B cell (primary cell): ENCODE measurements at regions of chr16 and their contacts with region 1.

Region 1: DNA sequence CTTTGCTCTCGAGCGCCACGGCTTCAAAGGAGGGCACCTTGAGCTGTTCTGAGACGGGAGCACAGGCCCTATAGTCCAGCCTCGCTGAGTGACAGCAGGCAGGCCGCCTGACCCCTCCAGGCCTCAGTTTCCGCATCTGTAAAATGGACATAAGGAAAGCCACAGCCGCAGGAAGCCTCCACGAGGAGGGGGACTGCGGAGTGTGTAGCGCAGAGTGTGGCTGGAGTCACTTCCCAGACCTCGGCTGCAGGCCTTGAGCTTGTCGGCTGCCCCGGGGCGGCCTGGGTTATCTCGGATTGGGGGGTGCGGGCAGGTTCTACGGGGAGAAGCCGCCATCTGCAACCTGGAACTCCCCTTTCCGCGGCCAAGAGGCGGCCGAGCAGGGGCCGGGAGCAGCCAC is 40.8 kb downstream of the ZFPM1 start:
- DNase-seq: no peak
- ATAC-seq: no peak
- H3K4me3 ChIP-seq: no peak overlapping the region
- H3K4me3 Mint-ChIP-seq: no peak overlapping the region
- H3K27ac ChIP-seq: no peak overlapping the region
- H3K27ac Mint-ChIP-seq: no peak overlapping the region
- H3K4me1 ChIP-seq: no peaks in the 10 kb centered on the region
- H3K4me1 Mint-ChIP-seq: no peaks in the 10 kb centered on the region
- H3K27me3 ChIP-seq: no peaks in the 10 kb centered on the region
- H3K27me3 Mint-ChIP-seq: no peaks in the 10 kb centered on the region
- CTCF ChIP-seq: no peak

Region 2: GRCh38 chr16:88479793-88480760 is 13.8 kb before region 1 on chr16:
- CTCF ChIA-PET with region 1: no interaction called
- POLR2A ChIA-PET with region 1: no interaction called
- intact Hi-C with region 1: no loop called
- DNase-seq: peak; percentile 85
- ATAC-seq: peak; percentile 81
- H3K4me3 ChIP-seq: peak overlapping the region in 4 of 5 experiments; percentile 17 to 53 (median 28)
- H3K4me3 Mint-ChIP-seq: peak overlapping the region; percentile 85
- H3K27ac ChIP-seq: peak overlapping the region; percentile 65 to 67
- H3K27ac Mint-ChIP-seq: peak overlapping the region; percentile 95
- H3K4me1 ChIP-seq: peaks cover 32 to 61% of the 10 kb centered on the region in 2 donors
- H3K4me1 Mint-ChIP-seq: peaks cover 49% of the 10 kb centered on the region
- H3K27me3 ChIP-seq: no peaks in the 10 kb centered on the region
- H3K27me3 Mint-ChIP-seq: no peaks in the 10 kb centered on the region
- CTCF ChIP-seq: no peak

Region 3: GRCh38 chr16:89145188-89146161 is 651.6 kb after region 1 on chr16:
- CTCF ChIA-PET with region 1: no interaction called
- POLR2A ChIA-PET with region 1: interaction called, 14 read pairs
- intact Hi-C with region 1: no loop called
- DNase-seq: no peak
- ATAC-seq: no peak
- H3K4me3 ChIP-seq: no peak overlapping the region
- H3K4me3 Mint-ChIP-seq: no peak overlapping the region
- H3K27ac ChIP-seq: no peak overlapping the region
- H3K27ac Mint-ChIP-seq: no peak overlapping the region
- H3K4me1 ChIP-seq: no peaks in the 10 kb centered on the region
- H3K4me1 Mint-ChIP-seq: no peaks in the 10 kb centered on the region
- H3K27me3 ChIP-seq: no peaks in the 10 kb centered on the region
- H3K27me3 Mint-ChIP-seq: no peaks in the 10 kb centered on the region
- CTCF ChIP-seq: no peak